Activated B cell treated with CpG ODN at 0.5 μM for 24 hours (primary cell): ENCODE measurements at regions of chr6 and their contacts with region 1.

Region 1: DNA sequence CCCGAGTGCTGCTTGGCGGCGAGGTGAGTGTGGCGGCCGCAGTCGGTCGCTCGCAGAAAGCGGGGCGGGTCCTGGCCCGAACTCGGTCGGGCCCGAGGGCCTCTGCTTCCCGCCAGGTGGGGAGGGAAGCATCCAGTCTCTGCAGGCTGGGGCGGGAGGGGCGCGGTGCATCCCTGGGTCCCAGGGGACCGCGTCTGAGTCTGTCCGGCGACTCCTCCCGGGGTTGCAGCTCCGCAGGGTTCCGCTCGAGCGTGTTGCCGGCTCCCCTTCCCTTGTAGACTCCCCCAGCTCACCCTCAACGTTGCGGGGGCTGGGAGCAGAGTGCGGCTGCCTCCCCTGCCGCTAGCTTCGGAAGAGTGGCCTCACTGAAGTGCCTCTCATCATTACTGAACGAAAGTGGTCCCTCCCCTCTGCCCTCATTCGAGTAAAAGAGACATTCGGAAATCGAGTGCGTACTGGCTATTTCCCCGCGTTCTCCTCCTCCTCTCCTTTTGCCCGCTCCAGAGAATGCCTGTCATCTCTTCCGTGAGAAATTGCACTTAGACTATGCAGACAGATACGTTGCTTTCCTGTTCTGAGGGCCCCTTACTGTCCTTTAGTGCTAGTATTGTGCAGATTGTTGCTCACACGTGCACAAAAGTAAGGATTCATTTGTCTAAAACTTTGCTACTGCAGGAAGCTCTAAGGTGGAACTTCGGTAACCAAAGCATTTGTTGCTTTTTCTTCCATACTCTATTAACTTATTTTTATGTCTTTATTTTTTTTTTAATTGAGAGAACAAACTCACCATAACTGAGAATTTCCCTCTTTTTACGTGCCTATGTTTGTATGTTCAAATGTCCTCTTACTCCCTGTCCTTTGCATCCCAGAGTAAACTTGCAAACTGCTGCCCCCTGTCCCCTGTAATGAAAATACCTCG is 751 bp downstream of the MAP3K4 start:
- DNase-seq: no peak
- ATAC-seq: peak; percentile 59
- H3K4me3 Mint-ChIP-seq: peak overlapping the region; percentile 90
- H3K27ac Mint-ChIP-seq: peak overlapping the region; percentile 83
- H3K4me1 Mint-ChIP-seq: peaks cover 44% of the 10 kb centered on the region
- H3K27me3 Mint-ChIP-seq: peaks cover 2% of the 10 kb centered on the region
- CTCF ChIP-seq: no peak

Region 2: GRCh38 chr6:160733050-160733646 is 259.2 kb before region 1 on chr6:
- CTCF ChIA-PET with region 1: no interaction called
- POLR2A ChIA-PET with region 1: no interaction called
- intact Hi-C with region 1: loop called (anchors 5 kb)
- DNase-seq: no peak
- ATAC-seq: peak; percentile 78
- H3K4me3 Mint-ChIP-seq: no peak overlapping the region
- H3K27ac Mint-ChIP-seq: no peak overlapping the region
- H3K4me1 Mint-ChIP-seq: no peaks in the 10 kb centered on the region
- H3K27me3 Mint-ChIP-seq: peaks cover 25% of the 10 kb centered on the region
- CTCF ChIP-seq: no peak

Region 3: DNA sequence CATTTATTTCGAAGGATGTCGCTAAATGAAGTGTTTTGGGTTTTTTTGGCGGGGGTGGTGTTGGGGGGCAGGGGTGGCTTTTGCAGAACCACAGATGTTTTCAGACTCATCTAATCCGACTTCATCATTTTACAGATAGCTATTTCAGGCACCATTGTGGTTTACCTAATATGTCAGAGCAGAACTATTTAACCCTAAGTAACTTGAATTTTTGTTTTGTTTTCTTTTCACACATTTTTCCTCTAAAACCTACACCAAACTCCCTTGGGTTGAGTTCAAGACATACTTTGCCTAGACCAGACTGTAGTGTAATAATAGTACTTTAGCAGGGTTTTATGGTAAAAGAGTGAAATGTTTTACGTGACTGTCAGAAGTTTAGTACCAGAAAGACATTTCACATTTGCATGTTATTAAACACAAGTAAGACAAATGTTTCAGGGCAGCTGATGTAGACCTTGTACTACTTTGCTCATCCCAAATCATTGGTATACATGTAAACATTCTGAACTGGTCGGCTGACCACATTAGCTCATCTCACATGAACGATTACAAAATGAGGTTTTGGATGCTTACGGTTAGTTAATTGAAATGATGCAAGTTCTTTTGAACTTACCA is 37.0 kb after region 1 on chr6:
- CTCF ChIA-PET with region 1: no interaction called
- POLR2A ChIA-PET with region 1: no interaction called
- intact Hi-C with region 1: loop called (anchors 5 kb)
- DNase-seq: no peak
- ATAC-seq: peak; percentile 28
- H3K4me3 Mint-ChIP-seq: peak overlapping the region; percentile 5
- H3K27ac Mint-ChIP-seq: no peak overlapping the region
- H3K4me1 Mint-ChIP-seq: peaks cover 38% of the 10 kb centered on the region
- H3K27me3 Mint-ChIP-seq: no peaks in the 10 kb centered on the region
- CTCF ChIP-seq: no peak

Region 4: DNA sequence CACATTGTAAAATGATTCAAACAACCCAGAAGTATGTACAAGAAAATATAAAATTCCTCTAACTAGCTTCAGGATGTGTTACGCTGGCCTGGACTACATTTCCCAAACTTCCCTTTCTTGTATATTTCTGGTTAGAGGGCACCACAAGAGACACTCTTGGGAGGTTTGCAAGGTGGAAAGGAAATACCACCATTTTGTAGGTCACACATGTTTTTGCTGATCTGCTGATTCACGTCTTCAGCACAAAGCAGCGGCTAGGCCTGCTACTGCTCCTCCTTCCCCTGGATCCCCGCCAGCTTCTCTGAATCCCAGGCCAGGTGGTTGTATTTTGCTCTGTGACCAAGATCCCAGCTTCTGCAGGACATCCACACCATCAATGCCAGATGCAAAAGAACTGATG is 177.4 kb after region 1 on chr6:
- CTCF ChIA-PET with region 1: no interaction called
- POLR2A ChIA-PET with region 1: no interaction called
- intact Hi-C with region 1: loop called (anchors 2 kb)
- DNase-seq: no peak
- ATAC-seq: no peak
- H3K4me3 Mint-ChIP-seq: peak overlapping the region; percentile 62
- H3K27ac Mint-ChIP-seq: peak overlapping the region; percentile 25
- H3K4me1 Mint-ChIP-seq: peaks cover 34% of the 10 kb centered on the region
- H3K27me3 Mint-ChIP-seq: no peaks in the 10 kb centered on the region
- CTCF ChIP-seq: no peak

Region 5: GRCh38 chr6:161273752-161274487 is 281.6 kb after region 1 on chr6 and contains the start of gene AGPAT4:
- CTCF ChIA-PET with region 1: no interaction called
- POLR2A ChIA-PET with region 1: interaction called, 3 read pairs
- intact Hi-C with region 1: loop called (anchors 1 kb)
- DNase-seq: peak; percentile 39
- ATAC-seq: peak; percentile 96
- H3K4me3 Mint-ChIP-seq: peak within 1 kb of the TSS; percentile 89
- H3K27ac Mint-ChIP-seq: peak within 1 kb of the TSS; percentile 76
- H3K4me1 Mint-ChIP-seq: peaks cover 17% of the 10 kb centered on the region
- H3K27me3 Mint-ChIP-seq: peaks cover 7% of the 10 kb centered on the region
- CTCF ChIP-seq: no peak
- total RNA-seq, gene AGPAT4: 2.8 and 4.7 TPM in 2 replicates

Region 6: DNA sequence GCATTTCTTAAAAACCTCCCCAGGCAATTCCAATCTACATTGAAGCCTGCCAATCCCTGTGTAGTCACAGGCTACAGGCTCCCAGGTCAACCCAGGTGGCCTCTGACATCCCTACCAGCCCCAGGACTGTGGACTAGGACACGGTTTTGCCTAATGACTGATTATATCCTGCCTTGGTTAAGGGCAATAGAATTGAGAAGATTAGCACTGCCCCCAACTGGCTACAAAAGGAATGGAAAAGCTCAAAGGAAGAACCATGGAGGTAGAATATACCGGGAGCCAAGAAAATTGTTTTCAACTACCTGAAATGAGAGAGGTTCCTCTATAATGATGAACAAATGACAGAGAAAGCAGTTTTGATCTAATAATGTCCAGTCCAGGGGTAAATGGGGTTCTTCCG is 702.7 kb after region 1 on chr6:
- CTCF ChIA-PET with region 1: no interaction called
- POLR2A ChIA-PET with region 1: no interaction called
- intact Hi-C with region 1: no loop called
- DNase-seq: no peak
- ATAC-seq: no peak
- H3K4me3 Mint-ChIP-seq: no peak overlapping the region
- H3K27ac Mint-ChIP-seq: no peak overlapping the region
- H3K4me1 Mint-ChIP-seq: no peaks in the 10 kb centered on the region
- H3K27me3 Mint-ChIP-seq: no peaks in the 10 kb centered on the region
- CTCF ChIP-seq: no peak

Region 7: GRCh38 chr6:162313922-162314660 is 1321.8 kb after region 1 on chr6:
- CTCF ChIA-PET with region 1: no interaction called
- POLR2A ChIA-PET with region 1: no interaction called
- intact Hi-C with region 1: no loop called
- DNase-seq: no peak
- ATAC-seq: no peak
- H3K4me3 Mint-ChIP-seq: no peak overlapping the region
- H3K27ac Mint-ChIP-seq: no peak overlapping the region
- H3K4me1 Mint-ChIP-seq: no peaks in the 10 kb centered on the region
- H3K27me3 Mint-ChIP-seq: no peaks in the 10 kb centered on the region
- CTCF ChIP-seq: no peak

Region 8: GRCh38 chr6:162727309-162728182 is 1735.2 kb after region 1 on chr6 and contains the starts of genes PACRG and PRKN:
- CTCF ChIA-PET with region 1: no interaction called
- POLR2A ChIA-PET with region 1: no interaction called
- intact Hi-C with region 1: loop called (anchors 1 kb)
- DNase-seq: peak; percentile 98
- ATAC-seq: peak; percentile 93
- H3K4me3 Mint-ChIP-seq: peak within 1 kb of the TSS; percentile 95
- H3K27ac Mint-ChIP-seq: peak within 1 kb of the TSS; percentile 81
- H3K4me1 Mint-ChIP-seq: peaks cover 10% of the 10 kb centered on the region
- H3K27me3 Mint-ChIP-seq: no peaks in the 10 kb centered on the region
- CTCF ChIP-seq: no peak
- total RNA-seq, gene PACRG: not detected in 2 replicates
- total RNA-seq, gene PRKN: 2.3 and 3.5 TPM in 2 replicates